CD14-positive monocyte (primary cell): ENCODE measurements at regions of chr12 and their contacts with region 1.

Region 1: GRCh38 chr12:7450665-7451064 is 6.7 kb upstream of the CD163L1 start:
- DNase-seq: no peak
- H3K4me3 ChIP-seq: no peak overlapping the region
- H3K4me3 Mint-ChIP-seq: no peak overlapping the region
- H3K27ac ChIP-seq: no peak overlapping the region
- H3K27ac Mint-ChIP-seq: no peak overlapping the region
- H3K4me1 ChIP-seq: peaks cover 3 to 6% of the 10 kb centered on the region in 2 donors
- H3K4me1 Mint-ChIP-seq: peaks cover 4% of the 10 kb centered on the region
- H3K27me3 ChIP-seq: no peaks in the 10 kb centered on the region
- H3K27me3 Mint-ChIP-seq: peaks cover 0 to 2% (median 0%) of the 10 kb centered on the region in 3 donors
- CTCF ChIP-seq: no peak

Region 2: DNA sequence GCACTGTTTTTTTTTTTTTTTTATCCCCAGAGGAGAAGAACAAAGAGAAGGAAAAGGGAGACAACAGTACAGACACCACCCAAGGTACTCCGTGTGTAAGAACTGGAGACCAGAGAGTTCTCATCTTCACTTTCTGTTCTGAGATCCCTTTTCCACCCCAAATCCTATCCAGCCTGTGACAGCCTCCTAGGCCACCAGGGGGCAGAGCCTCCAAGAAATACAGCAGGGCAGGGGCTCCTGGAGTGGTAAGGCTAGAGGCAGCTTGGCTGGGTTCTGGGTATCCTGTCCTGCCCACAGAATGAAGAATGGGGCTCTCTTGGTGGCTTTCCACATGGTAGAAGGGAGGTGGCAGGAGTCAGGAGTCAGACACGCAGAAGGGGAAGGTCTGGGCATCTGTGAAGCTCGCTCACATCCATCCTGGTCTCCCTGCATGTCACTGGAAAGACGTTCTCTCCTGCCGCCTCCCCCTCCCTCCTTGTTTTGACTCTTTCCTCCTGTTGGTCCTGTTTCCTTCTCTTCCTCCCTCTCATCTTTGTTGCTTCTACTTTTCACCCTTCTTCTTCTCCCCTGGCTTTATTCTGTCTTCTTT is 308.5 kb before region 1 on chr12:
- intact Hi-C with region 1: loop called in 1 of 2 experiments (anchors 10 kb)
- DNase-seq: peak; percentile 22 to 44 (median 37)
- H3K4me3 ChIP-seq: no peak overlapping the region
- H3K4me3 Mint-ChIP-seq: peak overlapping the region; percentile 13 to 32
- H3K27ac ChIP-seq: no peak overlapping the region
- H3K27ac Mint-ChIP-seq: peak overlapping the region in 2 of 7 donors; percentile 25 to 27
- H3K4me1 ChIP-seq: peaks cover 0 to 8% of the 10 kb centered on the region in 2 donors
- H3K4me1 Mint-ChIP-seq: peaks cover 10% of the 10 kb centered on the region
- H3K27me3 ChIP-seq: no peaks in the 10 kb centered on the region
- H3K27me3 Mint-ChIP-seq: peaks cover 0 to 1% (median 0%) of the 10 kb centered on the region in 3 donors
- CTCF ChIP-seq: peak; percentile 77

Region 3: GRCh38 chr12:7479771-7480170 is 29.1 kb after region 1 on chr12:
- intact Hi-C with region 1: no loop called
- DNase-seq: no peak
- H3K4me3 ChIP-seq: no peak overlapping the region
- H3K4me3 Mint-ChIP-seq: no peak overlapping the region
- H3K27ac ChIP-seq: no peak overlapping the region
- H3K27ac Mint-ChIP-seq: no peak overlapping the region
- H3K4me1 ChIP-seq: no peaks in the 10 kb centered on the region
- H3K4me1 Mint-ChIP-seq: no peaks in the 10 kb centered on the region
- H3K27me3 ChIP-seq: no peaks in the 10 kb centered on the region
- H3K27me3 Mint-ChIP-seq: peaks cover 0 to 2% (median 0%) of the 10 kb centered on the region in 3 donors
- CTCF ChIP-seq: no peak